ENCODE measurements at regions of chr17 and their contacts with region 1.

Region 1: GRCh38 chr17:7296189-7296902 is 1.9 kb upstream of the YBX2 start:
- H3K4me3 ChIP-seq: no peak overlapping the region
- H3K27ac ChIP-seq: no peak overlapping the region
- H3K4me1 ChIP-seq: peaks cover 6% of the 10 kb centered on the region; the same call in 1 of the 2 replicates
- CTCF ChIP-seq: peak; percentile 96

Region 2: DNA sequence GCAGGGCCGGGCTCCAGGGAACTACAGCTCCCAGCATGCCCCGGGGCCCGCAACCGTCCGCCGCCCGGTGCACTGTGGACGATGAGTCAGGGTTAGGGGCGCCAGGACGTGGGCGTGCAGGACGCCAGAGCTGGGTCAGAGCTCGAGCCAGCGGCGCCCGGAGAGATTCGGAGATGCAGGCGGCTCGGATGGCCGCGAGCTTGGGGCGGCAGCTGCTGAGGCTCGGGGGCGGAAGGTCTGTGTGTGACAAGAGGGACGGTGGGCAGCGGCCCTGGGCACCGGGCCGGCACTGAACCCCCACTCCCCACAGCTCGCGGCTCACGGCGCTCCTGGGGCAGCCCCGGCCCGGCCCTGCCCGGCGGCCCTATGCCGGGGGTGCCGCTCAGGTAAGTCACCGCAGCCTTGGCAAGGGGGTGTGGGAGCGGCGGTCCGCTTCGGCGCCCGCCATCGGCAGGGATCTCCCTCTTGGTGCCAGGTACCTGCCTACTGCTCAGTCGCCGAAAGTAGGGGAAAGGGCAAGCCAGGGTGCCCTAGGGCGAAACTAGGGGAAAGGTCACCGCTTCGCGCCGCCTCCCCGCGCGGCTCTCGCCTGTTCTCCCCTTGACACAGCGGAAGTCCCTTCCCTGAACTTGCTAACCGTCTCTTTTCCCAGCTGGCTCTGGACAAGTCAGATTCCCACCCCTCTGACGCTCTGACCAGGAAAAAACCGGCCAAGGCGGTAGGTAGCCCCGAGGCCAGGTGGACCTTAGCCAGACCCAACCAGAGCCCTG is 76.3 kb before region 1 on chr17 and contains the starts of genes ACADVL and DLG4:
- CTCF ChIA-PET with region 1: interaction called, 34 read pairs
- POLR2A ChIA-PET with region 1: interaction called, 16 read pairs
- H3K4me3 ChIP-seq: peak within 1 kb of the TSS; percentile 83
- H3K27ac ChIP-seq: peak within 1 kb of the TSS; percentile 83; the same call in 1 of the 2 replicates
- H3K4me1 ChIP-seq: peaks cover 7% of the 10 kb centered on the region
- CTCF ChIP-seq: no peak

Region 3: DNA sequence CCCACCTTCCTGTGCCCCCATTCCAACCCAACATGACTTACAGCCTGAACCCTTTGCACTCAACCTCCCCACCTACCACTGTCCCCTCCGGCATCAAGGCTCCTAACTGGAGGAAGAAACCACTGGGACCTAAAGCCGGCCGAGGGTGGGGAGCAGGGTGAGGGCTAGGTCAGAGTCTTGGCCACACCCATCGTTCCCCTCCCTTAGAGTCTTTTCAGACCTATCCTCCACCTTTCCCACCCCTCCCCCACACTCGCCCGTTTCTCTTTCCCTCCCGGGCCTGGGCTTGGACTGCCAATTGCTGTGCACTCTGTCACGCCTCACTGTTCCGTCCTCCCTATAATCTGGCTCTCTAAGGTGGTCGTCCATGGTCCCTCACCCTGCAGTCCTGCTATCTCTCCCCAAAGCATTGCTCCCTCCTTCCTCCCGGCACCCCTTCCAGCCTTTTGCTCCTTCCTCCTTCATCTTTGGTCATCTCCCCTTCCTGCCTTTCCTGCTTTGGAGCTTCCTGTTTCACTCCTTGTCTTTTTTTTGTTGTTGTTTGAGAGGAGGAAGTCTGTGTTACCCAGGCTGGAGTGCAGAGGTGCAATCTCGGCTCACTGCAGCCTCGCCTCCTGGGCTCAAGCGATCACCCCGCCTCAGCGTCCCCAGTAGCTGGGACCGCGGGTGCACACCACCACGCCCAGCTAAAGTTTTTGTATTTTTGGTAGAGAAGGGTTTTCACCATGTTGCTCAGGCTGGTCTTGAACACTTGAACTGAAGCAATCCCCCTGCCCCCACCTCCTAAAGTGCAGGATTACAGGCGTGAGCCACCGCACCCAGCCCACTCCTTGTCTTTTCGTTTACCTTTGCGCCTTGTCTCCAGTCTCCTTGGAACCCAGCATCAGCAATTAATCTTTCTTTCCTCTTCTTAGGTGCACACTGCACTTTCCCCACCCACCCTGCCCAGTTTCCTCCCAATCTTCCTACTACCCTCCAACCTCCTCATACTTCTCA is 33.0 kb before region 1 on chr17:
- CTCF ChIA-PET with region 1: interaction called, 24 read pairs
- POLR2A ChIA-PET with region 1: no interaction called
- H3K4me3 ChIP-seq: peak overlapping the region; percentile 40
- H3K27ac ChIP-seq: peak overlapping the region; percentile 80
- H3K4me1 ChIP-seq: peaks cover 18% of the 10 kb centered on the region
- CTCF ChIP-seq: no peak

Region 4: GRCh38 chr17:7308625-7309433 is 12.5 kb after region 1 on chr17:
- CTCF ChIA-PET with region 1: interaction called, 30 read pairs
- POLR2A ChIA-PET with region 1: interaction called, 12 read pairs
- H3K4me3 ChIP-seq: peak overlapping the region; percentile 80
- H3K27ac ChIP-seq: peak overlapping the region; percentile 99
- H3K4me1 ChIP-seq: peaks cover 19% of the 10 kb centered on the region
- CTCF ChIP-seq: no peak

Region 5: GRCh38 chr17:7329374-7329996 is 33.1 kb after region 1 on chr17:
- CTCF ChIA-PET with region 1: interaction called, 12 read pairs
- POLR2A ChIA-PET with region 1: interaction called, 6 read pairs
- H3K4me3 ChIP-seq: peak overlapping the region; percentile 64
- H3K27ac ChIP-seq: peak overlapping the region; percentile 86
- H3K4me1 ChIP-seq: peaks cover 9% of the 10 kb centered on the region
- CTCF ChIP-seq: no peak

Region 6: DNA sequence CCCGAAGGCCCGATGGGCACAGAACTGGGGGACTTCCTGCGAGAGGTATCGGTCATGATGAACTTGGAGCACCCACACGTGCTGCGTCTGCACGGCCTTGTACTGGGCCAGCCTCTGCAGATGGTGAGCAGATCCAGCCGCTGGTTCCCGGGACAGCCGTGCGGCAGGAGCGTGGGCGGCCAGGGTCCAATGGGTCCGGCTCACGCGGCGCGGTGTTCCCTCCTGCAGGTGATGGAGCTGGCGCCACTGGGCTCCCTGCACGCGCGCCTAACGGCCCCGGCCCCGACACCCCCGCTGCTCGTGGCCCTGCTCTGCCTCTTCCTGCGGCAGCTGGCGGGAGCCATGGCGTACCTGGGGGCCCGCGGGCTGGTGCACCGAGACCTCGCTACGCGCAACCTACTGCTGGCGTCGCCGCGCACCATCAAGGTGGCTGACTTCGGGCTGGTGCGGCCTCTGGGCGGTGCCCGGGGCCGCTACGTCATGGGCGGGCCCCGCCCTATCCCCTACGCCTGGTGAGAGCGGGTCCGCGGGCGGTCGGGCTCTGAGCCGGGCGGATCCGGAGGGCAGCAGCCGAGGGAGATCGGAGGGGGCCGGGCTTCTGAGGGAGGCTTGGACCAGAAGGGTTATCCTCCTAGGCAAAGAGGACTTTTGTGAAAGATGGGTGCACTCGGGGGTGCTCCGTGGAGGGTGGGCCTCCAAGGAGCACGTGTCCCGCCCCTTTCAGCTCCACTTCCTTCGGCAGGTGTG is 87.6 kb after region 1 on chr17:
- CTCF ChIA-PET with region 1: no interaction called
- POLR2A ChIA-PET with region 1: no interaction called
- H3K4me3 ChIP-seq: no peak overlapping the region
- H3K27ac ChIP-seq: no peak overlapping the region
- H3K4me1 ChIP-seq: no peaks in the 10 kb centered on the region
- CTCF ChIP-seq: no peak